ENCODE measurements at regions of chr17 and their contacts with region 1.

Region 1: DNA sequence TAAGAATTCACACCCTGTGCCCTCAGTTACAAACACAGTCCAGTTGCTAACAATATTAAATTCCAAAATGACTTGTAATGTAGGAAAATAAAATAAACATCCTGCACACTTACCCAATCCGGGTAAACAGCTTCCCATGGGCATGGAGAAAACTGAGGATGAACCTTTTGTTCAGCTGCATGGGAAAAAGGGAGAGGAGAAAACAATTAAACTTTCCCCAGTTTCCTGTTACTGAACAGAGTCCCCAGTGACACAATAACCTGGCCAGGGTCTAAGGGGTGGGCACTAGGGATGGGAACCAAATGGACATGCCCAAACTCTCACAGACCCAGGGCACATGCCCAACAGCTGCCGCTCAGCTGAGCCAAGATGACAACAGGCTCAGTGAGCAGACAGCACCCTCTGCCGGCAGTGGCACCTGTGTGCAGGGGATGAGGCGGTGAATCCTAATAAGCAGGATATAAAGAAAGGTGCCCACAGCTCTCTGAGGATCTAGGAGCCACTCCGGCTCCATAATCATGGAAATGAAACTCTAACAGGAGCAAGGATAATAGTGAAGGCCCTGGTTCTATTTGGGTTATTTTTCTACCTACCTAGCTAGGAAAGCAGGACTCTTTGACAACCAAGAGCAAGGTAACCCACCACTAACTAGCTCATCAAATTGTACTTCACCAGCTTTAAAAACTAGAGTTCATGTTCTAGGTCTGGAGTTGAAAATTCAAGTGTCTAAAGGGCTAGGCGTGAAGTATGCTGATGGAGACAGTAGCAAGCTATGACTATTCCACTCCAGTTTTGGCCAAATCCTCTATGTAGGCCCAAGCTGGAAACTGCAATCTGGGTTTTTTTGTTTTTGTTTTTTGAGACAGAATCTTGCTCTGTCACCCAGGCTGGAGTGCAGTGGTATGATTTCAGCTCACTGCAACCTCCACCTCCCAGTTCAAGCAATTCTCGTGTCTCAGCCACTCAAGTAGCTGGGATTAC is 58.8 kb downstream of the SMG6 start:
- DNase-seq: peak; percentile 87
- H3K4me3 Mint-ChIP-seq: no peak overlapping the region
- H3K27ac Mint-ChIP-seq: peak overlapping the region; percentile 69
- H3K4me1 Mint-ChIP-seq: peaks cover 70% of the 10 kb centered on the region
- H3K27me3 Mint-ChIP-seq: no peaks in the 10 kb centered on the region

Region 2: DNA sequence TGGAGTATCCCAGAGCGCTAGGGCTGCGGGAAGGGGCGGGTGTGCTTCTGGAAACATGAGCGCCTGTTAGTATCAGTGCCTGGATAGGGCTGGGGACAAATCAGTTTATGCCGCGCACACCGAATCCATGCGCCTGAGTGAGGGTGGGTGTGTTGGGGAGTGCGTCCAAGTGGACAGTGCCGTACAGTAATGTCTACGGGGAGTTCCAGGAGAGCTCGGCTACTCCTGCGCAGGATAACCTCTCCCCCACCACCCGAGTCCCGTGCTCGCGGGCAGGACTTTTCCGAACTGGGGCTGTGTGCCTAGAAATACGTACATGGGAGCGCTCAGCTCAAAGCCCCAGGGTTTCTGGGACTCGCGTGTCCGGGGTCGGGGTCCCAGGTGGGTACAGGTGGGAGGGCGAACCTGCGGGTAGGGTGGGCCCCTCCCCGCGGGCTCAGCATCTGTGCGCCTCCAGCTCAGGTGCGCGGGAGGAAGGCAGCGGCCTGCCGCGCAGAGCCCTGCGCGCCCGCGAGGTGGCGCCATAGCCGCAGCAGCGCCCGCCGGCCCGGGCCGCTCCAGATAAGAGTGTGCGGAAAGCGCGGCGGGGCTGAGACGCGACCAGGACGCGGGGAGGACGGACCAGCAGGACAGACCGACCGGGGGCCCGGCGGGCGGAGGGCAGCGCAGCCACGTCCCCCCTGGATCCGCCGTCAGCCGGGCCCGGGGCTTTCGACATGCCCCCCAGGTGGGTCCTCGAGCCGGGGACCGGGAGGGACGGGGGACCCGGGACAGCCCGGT is 190.1 kb before region 1 on chr17 and contains the start of gene HIC1:
- CTCF ChIA-PET with region 1: interaction called, 210 read pairs
- POLR2A ChIA-PET with region 1: interaction called, 94 read pairs
- DNase-seq: peak; percentile 85
- H3K4me3 Mint-ChIP-seq: peak within 1 kb of the TSS; percentile 79
- H3K27ac Mint-ChIP-seq: peak within 1 kb of the TSS; percentile 71
- H3K4me1 Mint-ChIP-seq: peaks cover 24% of the 10 kb centered on the region
- H3K27me3 Mint-ChIP-seq: peaks cover 17% of the 10 kb centered on the region
- total RNA-seq, gene HIC1: 38.3 to 39.8 TPM

Region 3: GRCh38 chr17:2070241-2071023 is 174.4 kb before region 1 on chr17:
- CTCF ChIA-PET with region 1: interaction called, 25 read pairs
- POLR2A ChIA-PET with region 1: interaction called, 3 read pairs
- DNase-seq: peak; percentile 88
- H3K4me3 Mint-ChIP-seq: peak overlapping the region; percentile 33
- H3K27ac Mint-ChIP-seq: peak overlapping the region; percentile 90
- H3K4me1 Mint-ChIP-seq: peaks cover 81% of the 10 kb centered on the region
- H3K27me3 Mint-ChIP-seq: no peaks in the 10 kb centered on the region

Region 4: GRCh38 chr17:2090804-2091534 is 153.9 kb before region 1 on chr17:
- CTCF ChIA-PET with region 1: interaction called, 27 read pairs
- POLR2A ChIA-PET with region 1: interaction called, 10 read pairs
- DNase-seq: no peak
- H3K4me3 Mint-ChIP-seq: no peak overlapping the region
- H3K27ac Mint-ChIP-seq: peak overlapping the region; percentile 23
- H3K4me1 Mint-ChIP-seq: peaks cover 64% of the 10 kb centered on the region
- H3K27me3 Mint-ChIP-seq: no peaks in the 10 kb centered on the region

Region 5: GRCh38 chr17:2259769-2260536 is 15.1 kb after region 1 on chr17:
- CTCF ChIA-PET with region 1: interaction called, 39 read pairs
- POLR2A ChIA-PET with region 1: interaction called, 159 read pairs
- DNase-seq: peak; percentile 85
- H3K4me3 Mint-ChIP-seq: peak overlapping the region; percentile 67
- H3K27ac Mint-ChIP-seq: peak overlapping the region; percentile 94
- H3K4me1 Mint-ChIP-seq: peaks cover 80% of the 10 kb centered on the region
- H3K27me3 Mint-ChIP-seq: no peaks in the 10 kb centered on the region

Region 6: GRCh38 chr17:2275722-2276121 is 30.9 kb after region 1 on chr17:
- CTCF ChIA-PET with region 1: interaction called, 22 read pairs
- POLR2A ChIA-PET with region 1: interaction called, 5 read pairs
- DNase-seq: peak; percentile 44
- H3K4me3 Mint-ChIP-seq: no peak overlapping the region
- H3K27ac Mint-ChIP-seq: peak overlapping the region; percentile 69
- H3K4me1 Mint-ChIP-seq: peaks cover 61% of the 10 kb centered on the region
- H3K27me3 Mint-ChIP-seq: no peaks in the 10 kb centered on the region

Region 7: DNA sequence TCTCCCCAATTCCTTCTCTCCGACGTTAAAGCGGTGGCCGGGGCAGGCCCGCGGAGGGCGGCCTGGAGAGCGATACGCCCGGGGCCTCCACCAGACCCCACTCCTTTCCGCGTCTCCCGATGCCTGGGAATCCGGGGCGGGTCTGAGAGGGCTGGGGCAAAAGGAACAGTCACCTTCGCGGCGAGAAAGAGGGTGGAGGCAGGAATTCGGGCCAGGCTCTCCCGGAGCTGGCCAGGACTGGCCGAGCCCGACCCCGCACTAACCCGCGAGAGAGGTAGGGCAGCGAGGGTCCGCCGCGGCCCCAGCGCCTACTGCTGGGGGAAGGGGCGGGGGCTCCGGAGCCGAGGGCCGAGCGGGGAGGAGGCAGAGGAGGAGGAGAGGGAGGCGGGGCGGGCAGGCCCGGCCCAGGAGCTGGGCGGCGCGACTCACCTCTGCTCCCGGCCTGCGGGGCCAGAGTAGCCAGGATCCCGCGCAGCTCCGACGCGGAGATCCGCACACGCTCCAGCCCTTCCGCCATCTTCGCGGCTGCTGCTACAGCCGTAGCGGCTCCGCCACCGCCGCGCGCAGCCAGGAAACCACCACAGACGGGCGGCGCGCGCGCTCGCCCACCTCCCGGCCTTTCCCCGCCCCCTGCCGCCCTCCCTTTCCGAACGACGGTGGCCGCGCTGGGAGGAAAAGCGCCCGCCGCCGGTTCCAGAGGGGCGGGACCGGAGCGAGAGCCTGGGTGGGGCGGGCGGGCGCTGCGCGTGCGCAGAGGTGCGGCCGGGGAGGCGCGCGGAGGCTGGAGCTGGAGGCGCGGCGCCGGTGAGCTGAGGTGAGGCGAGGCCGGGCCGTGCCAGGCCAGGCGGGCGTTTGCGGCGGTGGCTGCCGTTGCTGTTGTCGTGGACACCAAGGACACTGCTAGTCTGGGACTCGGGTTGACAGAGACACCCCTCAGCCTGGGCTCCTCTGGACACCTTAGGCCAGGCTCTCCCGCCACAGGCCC is 58.7 kb after region 1 on chr17 and contains the starts of genes SMG6 and SRR:
- CTCF ChIA-PET with region 1: interaction called, 11 read pairs
- POLR2A ChIA-PET with region 1: interaction called, 7 read pairs
- DNase-seq: peak; percentile 96
- H3K4me3 Mint-ChIP-seq: peak within 1 kb of the TSS; percentile 92
- H3K27ac Mint-ChIP-seq: peak within 1 kb of the TSS; percentile 73
- H3K4me1 Mint-ChIP-seq: peaks cover 49% of the 10 kb centered on the region
- H3K27me3 Mint-ChIP-seq: no peaks in the 10 kb centered on the region
- total RNA-seq, gene SMG6: 37.8 to 38.7 TPM
- total RNA-seq, gene SRR: 19.3 to 19.5 TPM

Region 8: DNA sequence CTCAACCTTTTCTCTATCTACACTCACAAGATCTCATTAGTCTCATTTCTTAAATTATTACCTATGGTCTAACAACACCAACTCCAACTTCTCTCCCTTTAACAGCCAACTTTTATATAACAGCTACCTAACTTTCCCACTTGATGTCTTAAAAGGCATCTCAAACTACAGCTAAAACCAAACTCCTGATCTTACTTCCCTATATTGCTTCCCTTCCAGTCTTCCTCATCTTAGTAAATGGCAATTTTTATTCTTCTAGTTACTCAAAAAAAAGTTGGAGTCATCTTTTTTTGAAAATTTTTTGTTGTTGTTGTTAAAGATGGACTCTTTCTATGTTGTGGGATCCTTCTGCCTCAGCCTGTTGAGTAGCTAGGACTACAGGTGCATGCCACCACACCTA is 74.2 kb after region 1 on chr17:
- CTCF ChIA-PET with region 1: no interaction called
- POLR2A ChIA-PET with region 1: no interaction called
- DNase-seq: no peak
- H3K4me3 Mint-ChIP-seq: no peak overlapping the region
- H3K27ac Mint-ChIP-seq: no peak overlapping the region
- H3K4me1 Mint-ChIP-seq: peaks cover 2% of the 10 kb centered on the region
- H3K27me3 Mint-ChIP-seq: no peaks in the 10 kb centered on the region

Region 9: DNA sequence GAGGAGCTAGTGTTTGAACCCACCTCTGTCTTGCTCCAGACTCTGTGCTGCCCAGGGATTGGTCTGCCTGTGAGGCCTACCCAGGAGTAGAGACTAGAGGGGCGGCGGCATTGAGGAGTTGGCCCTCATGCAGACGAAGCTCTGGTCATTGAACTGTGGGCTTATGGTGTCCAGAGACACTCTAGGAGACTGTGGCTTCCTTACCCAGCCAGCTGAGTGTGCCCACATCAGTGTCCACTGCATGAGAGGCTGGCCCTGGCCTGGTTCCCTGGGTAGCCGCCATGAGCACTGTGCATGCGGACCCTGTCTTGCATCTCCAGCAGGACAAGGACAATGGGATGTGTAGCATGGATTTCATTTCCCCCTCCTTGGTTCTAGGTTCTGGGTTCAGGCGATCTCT is 106.4 kb after region 1 on chr17:
- CTCF ChIA-PET with region 1: no interaction called
- POLR2A ChIA-PET with region 1: no interaction called
- DNase-seq: no peak
- H3K4me3 Mint-ChIP-seq: no peak overlapping the region
- H3K27ac Mint-ChIP-seq: no peak overlapping the region
- H3K4me1 Mint-ChIP-seq: peaks cover 17% of the 10 kb centered on the region
- H3K27me3 Mint-ChIP-seq: no peaks in the 10 kb centered on the region

Region 10: DNA sequence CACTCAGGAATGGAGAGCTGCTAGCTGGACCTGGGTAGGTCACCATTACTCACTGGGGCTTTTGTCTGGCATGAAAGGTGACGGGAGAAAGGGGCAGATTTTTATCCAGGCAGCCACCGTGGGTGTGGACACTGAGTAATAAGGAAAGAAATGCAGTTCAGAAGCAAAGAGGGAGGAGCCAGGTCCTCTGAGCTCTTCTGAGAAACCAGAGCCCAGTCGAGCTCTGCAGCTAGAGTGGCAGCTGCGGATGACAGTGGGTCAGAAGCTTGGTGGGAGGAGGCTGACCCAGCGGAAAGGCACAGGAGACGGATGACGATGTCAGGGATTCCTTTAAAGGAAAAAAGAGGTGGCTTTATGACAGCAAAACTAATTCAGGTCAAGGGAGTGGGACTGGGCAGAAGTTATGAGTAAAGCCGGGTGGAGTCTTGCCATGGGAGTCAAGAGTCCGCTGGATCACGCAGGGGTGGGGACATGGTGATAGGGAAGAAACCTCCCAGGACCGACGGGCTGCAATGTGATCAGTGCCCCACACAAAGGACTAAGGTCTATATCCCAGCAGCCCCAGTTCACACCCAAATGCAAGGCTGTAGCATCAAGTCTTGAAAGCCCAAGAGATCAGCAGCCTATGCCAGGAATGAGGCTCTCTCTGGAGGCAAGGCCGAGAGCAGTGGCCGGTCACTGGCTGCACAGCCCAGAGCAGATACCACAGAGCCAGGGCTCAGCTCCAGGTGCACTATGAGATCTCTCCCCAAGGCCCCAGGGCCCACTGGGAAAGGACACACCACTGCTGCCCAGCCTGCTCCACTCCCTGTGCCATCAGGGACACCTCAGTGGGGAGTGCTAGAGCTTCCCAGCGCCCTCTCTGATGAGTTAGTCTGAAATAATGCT is 162.3 kb after region 1 on chr17:
- CTCF ChIA-PET with region 1: no interaction called
- POLR2A ChIA-PET with region 1: no interaction called
- DNase-seq: no peak
- H3K4me3 Mint-ChIP-seq: no peak overlapping the region
- H3K27ac Mint-ChIP-seq: peak overlapping the region; percentile 47
- H3K4me1 Mint-ChIP-seq: peaks cover 32% of the 10 kb centered on the region
- H3K27me3 Mint-ChIP-seq: no peaks in the 10 kb centered on the region

Region 11: DNA sequence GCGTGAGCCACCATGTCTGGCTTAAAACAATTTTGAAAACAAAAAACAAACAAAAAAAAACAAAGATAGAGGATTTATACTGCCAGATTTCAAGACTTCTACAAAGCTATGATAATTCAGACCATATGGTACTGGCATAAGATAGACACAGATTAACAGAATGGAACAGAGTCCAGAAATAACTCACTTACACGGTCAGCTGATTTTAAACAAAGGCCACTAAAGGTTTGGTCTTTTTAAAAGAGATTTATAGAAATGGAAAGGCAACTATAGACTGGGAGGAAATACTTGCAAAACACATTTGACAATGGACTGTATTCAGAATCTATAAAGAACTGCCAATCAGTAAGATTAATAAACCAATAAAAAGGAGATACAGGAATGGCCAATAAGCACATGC is 204.7 kb after region 1 on chr17:
- CTCF ChIA-PET with region 1: no interaction called
- POLR2A ChIA-PET with region 1: no interaction called
- DNase-seq: no peak
- H3K4me3 Mint-ChIP-seq: no peak overlapping the region
- H3K27ac Mint-ChIP-seq: no peak overlapping the region
- H3K4me1 Mint-ChIP-seq: peaks cover 10% of the 10 kb centered on the region
- H3K27me3 Mint-ChIP-seq: no peaks in the 10 kb centered on the region